ENCODE measurements at regions of chr16 and their contacts with region 1.

Region 1: DNA sequence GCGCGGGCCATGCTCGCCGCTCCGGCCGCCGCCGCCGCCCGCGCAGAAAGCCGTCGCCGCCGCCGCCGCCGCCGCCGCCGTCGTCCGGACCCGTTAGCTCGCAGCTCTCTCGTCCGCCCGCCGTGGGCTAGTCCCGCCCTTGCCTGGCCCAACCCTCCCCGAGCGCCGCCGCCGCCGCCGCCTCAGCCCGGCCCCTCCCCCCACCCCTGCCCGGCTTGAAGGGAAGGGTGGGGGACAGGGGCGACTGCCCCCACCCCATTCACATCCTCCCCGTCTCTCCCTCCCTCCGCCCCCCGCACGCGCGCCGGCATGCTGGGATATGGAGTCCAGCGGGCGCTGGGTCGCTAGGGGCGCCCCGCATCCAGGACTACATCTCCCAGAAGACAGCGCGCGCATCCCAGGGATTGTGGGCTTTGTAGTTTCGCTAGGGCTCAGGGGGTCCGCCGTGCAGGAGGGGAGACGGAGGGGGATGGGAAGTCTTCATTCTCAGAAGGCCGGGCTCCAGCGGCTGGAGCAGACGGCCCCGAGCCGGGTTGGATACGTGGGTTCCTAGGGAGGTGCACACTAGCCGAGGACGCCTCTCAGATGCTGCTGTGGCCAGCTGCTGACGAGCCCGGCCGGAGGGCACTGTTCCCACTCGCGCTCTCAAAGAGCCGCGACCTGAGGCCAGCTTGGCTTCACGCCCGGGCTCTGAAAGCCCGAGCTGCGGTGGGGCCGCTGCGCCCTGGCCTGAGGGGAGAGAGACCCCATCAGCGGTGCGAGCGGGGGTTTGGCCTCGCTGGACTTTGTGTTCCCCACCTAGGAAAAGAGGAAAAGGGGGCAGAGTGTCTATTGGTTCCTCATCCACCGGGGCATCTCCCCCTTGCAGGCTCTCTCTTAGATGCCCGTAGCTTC is at the start of gene ST3GAL2:
- DNase-seq: peak; percentile 95 to 98
- ATAC-seq: peak; percentile 97 to 98 (median 98)
- H3K4me3 ChIP-seq: peak within 1 kb of the TSS; percentile 91
- H3K27ac ChIP-seq: peak within 1 kb of the TSS; percentile 77
- H3K4me1 ChIP-seq: peaks cover 37% of the 10 kb centered on the region
- H3K27me3 ChIP-seq: no peaks in the 10 kb centered on the region
- CTCF ChIP-seq: no peak
- total RNA-seq, gene ST3GAL2: 16.8 to 33.0 (median 22.6) TPM

Region 2: GRCh38 chr16:70380861-70381603 is 58.2 kb before region 1 on chr16:
- intact Hi-C with region 1: loop called in 1 of 2 experiments (anchors 5 kb)
- DNase-seq: peak; percentile 96 to 98
- ATAC-seq: peak; percentile 91 to 95 (median 92)
- H3K4me3 ChIP-seq: peak overlapping the region; percentile 86
- H3K27ac ChIP-seq: peak overlapping the region; percentile 96
- H3K4me1 ChIP-seq: peaks cover 24% of the 10 kb centered on the region
- H3K27me3 ChIP-seq: no peaks in the 10 kb centered on the region
- CTCF ChIP-seq: peak; percentile 34

Region 3: GRCh38 chr16:70402916-70403659 is 36.1 kb before region 1 on chr16:
- intact Hi-C with region 1: no loop called
- DNase-seq: no peak
- ATAC-seq: peak in 1 of 4 donors; percentile 23
- H3K4me3 ChIP-seq: no peak overlapping the region
- H3K27ac ChIP-seq: no peak overlapping the region
- H3K4me1 ChIP-seq: peaks cover 27% of the 10 kb centered on the region
- H3K27me3 ChIP-seq: no peaks in the 10 kb centered on the region
- CTCF ChIP-seq: no peak

Region 4: DNA sequence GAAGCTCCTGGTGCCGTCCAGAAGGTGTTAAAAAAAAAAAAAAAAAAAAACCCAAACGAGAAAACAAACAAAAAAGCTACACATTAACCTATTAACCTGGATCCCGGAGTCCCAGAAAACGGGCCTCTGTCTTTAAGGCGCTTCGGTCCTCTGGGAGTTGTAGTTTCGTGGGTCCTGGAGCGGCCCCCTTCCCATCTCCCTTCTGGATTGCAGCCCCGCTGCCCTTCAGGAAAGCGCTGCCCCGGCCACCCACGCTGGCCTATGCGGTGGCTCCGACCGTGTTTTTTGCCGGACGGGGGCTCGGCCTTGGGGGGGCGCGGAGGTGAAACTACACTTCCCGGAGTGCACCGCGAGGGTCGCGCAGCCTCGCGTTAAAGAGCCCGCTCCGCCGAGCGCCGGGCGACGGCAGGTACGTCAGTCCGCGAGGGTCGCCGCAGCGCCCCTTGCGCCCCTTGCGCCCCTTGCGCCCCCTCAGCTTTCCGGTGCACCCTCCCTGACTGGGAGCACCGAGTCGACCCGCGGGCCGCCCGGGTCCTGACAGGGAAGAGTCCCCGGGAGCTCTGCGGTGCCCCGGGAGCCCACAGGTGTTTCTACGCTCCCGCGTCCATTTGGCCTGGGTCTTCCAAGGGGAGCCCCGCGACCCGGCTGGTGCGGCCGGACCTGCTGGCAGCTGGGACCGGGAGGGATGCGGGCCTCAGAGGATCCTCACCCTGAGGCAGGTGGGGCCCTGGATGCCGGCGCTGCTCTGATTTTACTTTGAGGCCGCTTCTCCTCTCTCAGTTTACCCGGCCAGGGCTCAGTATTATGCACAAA is 15.2 kb after region 1 on chr16 and contains the start of gene FCSK:
- intact Hi-C with region 1: loop called in 1 of 2 experiments (anchors 2 kb)
- DNase-seq: peak; percentile 67 to 85
- ATAC-seq: peak; percentile 91 to 95 (median 92)
- H3K4me3 ChIP-seq: peak within 1 kb of the TSS; percentile 98
- H3K27ac ChIP-seq: peak within 1 kb of the TSS; percentile 99
- H3K4me1 ChIP-seq: peaks cover 4% of the 10 kb centered on the region
- H3K27me3 ChIP-seq: peaks cover 0 to 4% (median 0%) of the 10 kb centered on the region in 3 donors
- CTCF ChIP-seq: no peak
- total RNA-seq, gene FCSK: 4.9 to 11.0 (median 9.3) TPM